Ascending aorta (tissue), 2 donors: ENCODE measurements at regions of chr3 and their contacts with region 1.

Region 1: GRCh38 chr3:170180908-170181879 is at the start of gene PHC3:
- DNase-seq: peak; percentile 78 to 97
- H3K4me3 ChIP-seq: peak within 1 kb of the TSS; percentile 80 to 85
- H3K27ac ChIP-seq: peak within 1 kb of the TSS; percentile 97 to 98
- H3K4me1 ChIP-seq: peaks cover 0 to 15% of the 10 kb centered on the region in 2 donors
- H3K27me3 ChIP-seq: no peaks in the 10 kb centered on the region
- CTCF ChIP-seq: peak in 1 of 3 experiments; percentile 22
- total RNA-seq, gene PHC3: 43.3 TPM

Region 2: DNA sequence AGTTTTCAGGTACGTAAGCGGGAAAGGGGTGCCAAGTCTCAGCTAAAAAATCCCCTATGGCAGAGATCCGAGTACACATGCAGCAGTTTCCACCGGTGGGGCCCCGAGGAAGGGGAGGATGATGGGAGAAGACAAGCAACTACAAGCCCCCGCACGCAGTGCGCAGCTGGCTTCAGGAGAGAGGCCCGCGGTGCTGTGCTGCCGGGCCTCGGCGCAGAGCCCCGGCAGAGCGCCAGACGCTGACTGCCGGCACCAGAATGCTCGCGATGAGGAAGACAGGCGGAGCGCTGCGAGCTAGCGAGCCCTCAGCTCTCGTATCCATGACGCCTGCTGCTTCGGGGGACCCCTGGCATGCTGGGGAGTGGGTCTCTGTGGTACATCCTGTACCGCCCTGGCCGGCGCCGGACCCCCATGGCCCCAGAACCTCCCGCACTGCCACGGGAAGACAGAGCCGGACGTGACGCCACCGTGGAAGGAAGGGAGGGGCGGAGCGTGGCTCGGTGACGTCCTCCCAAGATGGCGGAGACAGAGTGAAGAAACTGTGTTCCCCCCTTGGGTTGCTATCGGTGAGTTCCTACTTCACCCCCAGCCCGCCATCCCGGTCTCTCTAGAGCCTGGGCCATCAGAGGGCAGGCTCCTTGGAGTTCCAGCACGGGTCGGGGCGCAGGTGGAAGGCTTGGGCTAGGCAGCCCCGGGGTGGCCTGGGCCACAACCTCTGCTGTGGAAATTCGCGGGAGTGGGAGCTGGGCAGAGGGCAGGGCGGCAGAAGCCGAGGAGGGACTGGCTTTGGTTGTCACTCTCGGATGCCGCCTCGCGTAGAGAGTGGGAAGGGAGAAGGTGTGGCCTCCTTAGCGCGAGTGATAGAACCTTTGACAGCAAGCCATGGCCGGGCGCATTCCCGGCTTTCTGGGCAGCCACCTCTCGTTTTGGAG is 408.0 kb before region 1 on chr3 and contains the start of gene MYNN:
- intact Hi-C with region 1: loop called (anchors 5 kb)
- DNase-seq: peak; percentile 74 to 96
- H3K4me3 ChIP-seq: peak within 1 kb of the TSS; percentile 75 to 78
- H3K27ac ChIP-seq: peak within 1 kb of the TSS; percentile 96 to 97
- H3K4me1 ChIP-seq: peaks cover 7 to 14% of the 10 kb centered on the region in 2 donors
- H3K27me3 ChIP-seq: no peaks in the 10 kb centered on the region
- CTCF ChIP-seq: peak in 1 of 3 experiments; percentile 11
- total RNA-seq, gene MYNN: 3.9 TPM

Region 3: GRCh38 chr3:170221924-170222646 is 40.9 kb after region 1 on chr3 and contains the start of gene PRKCI:
- intact Hi-C with region 1: loop called (anchors 1 kb)
- DNase-seq: peak; percentile 80 to 97
- H3K4me3 ChIP-seq: peak within 1 kb of the TSS; percentile 96 to 97
- H3K27ac ChIP-seq: peak within 1 kb of the TSS; percentile 94 to 96
- H3K4me1 ChIP-seq: peaks cover 0 to 17% of the 10 kb centered on the region in 2 donors
- H3K27me3 ChIP-seq: no peaks in the 10 kb centered on the region
- CTCF ChIP-seq: no peak
- total RNA-seq, gene PRKCI: 20.3 TPM